CD8-positive, alpha-beta T cell (primary cell): ENCODE measurements at regions of chr19 and their contacts with region 1.

Region 1: GRCh38 chr19:9140159-9140874 is at the start of gene ZNF317:
- DNase-seq: peak; percentile 80 to 96 (median 90)
- ATAC-seq: peak; percentile 88
- H3K4me3 ChIP-seq: peak within 1 kb of the TSS; percentile 82 to 93
- H3K4me3 Mint-ChIP-seq: peak within 1 kb of the TSS; percentile 95
- H3K27ac ChIP-seq: peak within 1 kb of the TSS; percentile 86 to 88
- H3K27ac Mint-ChIP-seq: peak within 1 kb of the TSS; percentile 98
- H3K4me1 ChIP-seq: peaks cover 24% of the 10 kb centered on the region
- H3K4me1 Mint-ChIP-seq: peaks cover 46% of the 10 kb centered on the region
- H3K27me3 ChIP-seq: peaks cover 0 to 3% of the 10 kb centered on the region in 2 experiments
- H3K27me3 Mint-ChIP-seq: peaks cover 1% of the 10 kb centered on the region
- CTCF ChIP-seq: no peak
- total RNA-seq, gene ZNF317: 127 to 130 TPM

Region 2: GRCh38 chr19:9086761-9087160 is 53.6 kb before region 1 on chr19 and contains the start of gene OR1M1:
- CTCF ChIA-PET with region 1: no interaction called
- POLR2A ChIA-PET with region 1: no interaction called
- intact Hi-C with region 1: no loop called
- DNase-seq: no peak
- ATAC-seq: no peak
- H3K4me3 ChIP-seq: no peak within 1 kb of the TSS
- H3K4me3 Mint-ChIP-seq: no peak within 1 kb of the TSS
- H3K27ac ChIP-seq: no peak within 1 kb of the TSS
- H3K27ac Mint-ChIP-seq: no peak within 1 kb of the TSS
- H3K4me1 ChIP-seq: no peaks in the 10 kb centered on the region
- H3K4me1 Mint-ChIP-seq: no peaks in the 10 kb centered on the region
- H3K27me3 ChIP-seq: no peaks in the 10 kb centered on the region
- H3K27me3 Mint-ChIP-seq: peaks cover 25% of the 10 kb centered on the region
- CTCF ChIP-seq: no peak
- total RNA-seq, gene OR1M1: not detected

Region 3: DNA sequence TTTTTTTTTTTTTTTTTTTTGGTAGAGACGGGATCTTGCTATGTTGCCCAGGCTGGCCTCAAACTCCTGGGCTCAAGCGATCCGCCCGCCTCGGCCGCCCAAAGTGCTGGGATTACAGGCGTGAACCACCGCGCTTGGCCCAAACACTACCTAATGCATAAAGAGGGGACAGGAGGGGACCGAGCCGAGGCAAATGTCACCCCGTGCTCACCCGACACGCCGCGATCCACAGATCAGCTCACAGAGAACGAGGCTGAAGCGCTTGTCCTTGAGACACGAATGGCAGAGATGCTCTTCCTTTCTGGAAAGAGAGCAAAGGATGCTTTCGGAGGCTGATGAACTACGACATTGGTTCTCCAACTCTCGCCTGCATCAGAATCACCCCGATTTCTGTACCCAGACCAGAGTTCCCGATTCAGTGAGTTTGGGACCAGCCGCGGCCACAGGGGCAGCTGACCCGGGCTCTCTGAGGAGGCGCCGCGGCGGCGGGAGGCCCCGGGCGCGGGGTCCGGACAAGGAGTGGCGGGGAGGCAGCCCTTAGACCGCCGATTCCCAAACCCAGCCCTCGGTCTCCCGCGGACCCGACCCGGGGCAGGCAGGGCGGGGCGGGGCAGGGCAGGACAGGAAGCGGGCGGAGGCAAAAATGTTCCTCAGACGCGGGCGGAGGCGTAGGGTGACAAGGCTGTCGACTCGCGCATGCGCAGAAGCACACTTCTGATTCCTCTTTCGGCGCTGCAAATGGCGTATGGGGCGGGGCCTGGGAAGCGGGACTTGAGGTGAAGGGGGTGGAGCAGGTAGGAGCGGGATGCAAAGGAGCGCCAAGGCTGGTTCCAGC is 169.0 kb after region 1 on chr19 and contains the start of gene ZNF699:
- CTCF ChIA-PET with region 1: no interaction called
- POLR2A ChIA-PET with region 1: no interaction called
- intact Hi-C with region 1: loop called (anchors 1 kb)
- DNase-seq: peak; percentile 96 to 99 (median 98)
- ATAC-seq: peak; percentile 90
- H3K4me3 ChIP-seq: peak within 1 kb of the TSS; percentile 86 to 100
- H3K4me3 Mint-ChIP-seq: peak within 1 kb of the TSS; percentile 94
- H3K27ac ChIP-seq: peak within 1 kb of the TSS; percentile 86
- H3K27ac Mint-ChIP-seq: peak within 1 kb of the TSS; percentile 96
- H3K4me1 ChIP-seq: peaks cover 13% of the 10 kb centered on the region
- H3K4me1 Mint-ChIP-seq: peaks cover 34% of the 10 kb centered on the region
- H3K27me3 ChIP-seq: no peaks in the 10 kb centered on the region
- H3K27me3 Mint-ChIP-seq: no peaks in the 10 kb centered on the region
- CTCF ChIP-seq: no peak
- total RNA-seq, gene ZNF699: 15.1 to 16.0 TPM

Region 4: GRCh38 chr19:9538183-9539058 is 398.1 kb after region 1 on chr19 and contains the start of gene ZNF426:
- CTCF ChIA-PET with region 1: no interaction called
- POLR2A ChIA-PET with region 1: no interaction called
- intact Hi-C with region 1: loop called in 1 of 2 experiments (anchors 5 kb)
- DNase-seq: peak; percentile 77 to 92 (median 86)
- ATAC-seq: peak; percentile 94
- H3K4me3 ChIP-seq: peak within 1 kb of the TSS; percentile 89 to 93
- H3K4me3 Mint-ChIP-seq: peak within 1 kb of the TSS; percentile 99
- H3K27ac ChIP-seq: peak within 1 kb of the TSS; percentile 91
- H3K27ac Mint-ChIP-seq: peak within 1 kb of the TSS; percentile 100
- H3K4me1 ChIP-seq: peaks cover 17% of the 10 kb centered on the region
- H3K4me1 Mint-ChIP-seq: peaks cover 35% of the 10 kb centered on the region
- H3K27me3 ChIP-seq: no peaks in the 10 kb centered on the region
- H3K27me3 Mint-ChIP-seq: no peaks in the 10 kb centered on the region
- CTCF ChIP-seq: no peak
- total RNA-seq, gene ZNF426: 16.6 to 17.9 TPM

Region 5: DNA sequence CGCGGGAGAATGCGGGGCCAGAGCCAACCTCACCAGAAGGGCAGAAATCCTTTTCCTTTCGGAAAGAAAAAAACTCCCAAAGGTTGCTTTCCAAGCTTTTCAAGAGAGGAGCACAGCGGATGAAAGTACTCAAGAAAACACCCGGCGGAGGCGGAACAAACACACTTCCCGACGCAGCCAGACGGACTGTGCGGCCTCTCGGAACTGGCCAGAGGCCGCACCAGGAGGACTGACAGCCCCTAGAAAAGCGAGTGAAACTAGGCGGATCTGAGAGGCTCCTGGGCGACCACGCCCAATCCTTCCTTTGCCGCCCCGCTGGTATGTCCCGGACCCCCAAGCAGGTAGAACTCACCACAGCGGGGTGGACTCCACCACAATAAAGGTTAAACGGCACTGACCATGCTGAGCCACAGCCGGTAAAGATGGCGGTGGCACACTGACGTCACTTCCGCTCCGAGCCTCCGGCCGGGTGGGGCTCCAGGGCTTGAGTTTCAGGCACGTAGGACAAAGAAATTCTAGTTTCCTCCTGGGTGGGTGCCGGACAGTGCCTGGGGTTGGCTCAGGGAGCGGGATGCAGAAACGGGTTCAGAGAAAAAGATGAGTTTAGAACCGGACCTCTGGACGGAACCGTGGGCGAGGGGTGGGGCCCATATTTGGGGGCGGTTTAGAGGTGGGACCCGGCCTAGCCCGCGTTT is 534.5 kb after region 1 on chr19 and contains the start of gene ZNF562:
- CTCF ChIA-PET with region 1: no interaction called
- POLR2A ChIA-PET with region 1: no interaction called
- intact Hi-C with region 1: loop called in 1 of 2 experiments (anchors 2 kb)
- DNase-seq: peak; percentile 60 to 89 (median 81)
- ATAC-seq: peak; percentile 81
- H3K4me3 ChIP-seq: peak within 1 kb of the TSS; percentile 65 to 90
- H3K4me3 Mint-ChIP-seq: peak within 1 kb of the TSS; percentile 97
- H3K27ac ChIP-seq: peak within 1 kb of the TSS; percentile 80 to 84
- H3K27ac Mint-ChIP-seq: peak within 1 kb of the TSS; percentile 99
- H3K4me1 ChIP-seq: no peaks in the 10 kb centered on the region
- H3K4me1 Mint-ChIP-seq: peaks cover 23% of the 10 kb centered on the region
- H3K27me3 ChIP-seq: no peaks in the 10 kb centered on the region
- H3K27me3 Mint-ChIP-seq: no peaks in the 10 kb centered on the region
- CTCF ChIP-seq: no peak
- total RNA-seq, gene ZNF562: 13.6 to 16.5 TPM

Region 6: GRCh38 chr19:9818734-9819589 is 678.6 kb after region 1 on chr19 and contains the start of gene FBXL12:
- CTCF ChIA-PET with region 1: no interaction called
- POLR2A ChIA-PET with region 1: no interaction called
- intact Hi-C with region 1: loop called in 1 of 2 experiments (anchors 1 kb)
- DNase-seq: peak; percentile 100
- ATAC-seq: peak; percentile 89
- H3K4me3 ChIP-seq: peak within 1 kb of the TSS; percentile 97 to 100
- H3K4me3 Mint-ChIP-seq: peak within 1 kb of the TSS; percentile 88
- H3K27ac ChIP-seq: peak within 1 kb of the TSS; percentile 98 to 99
- H3K27ac Mint-ChIP-seq: peak within 1 kb of the TSS; percentile 93
- H3K4me1 ChIP-seq: peaks cover 18% of the 10 kb centered on the region
- H3K4me1 Mint-ChIP-seq: peaks cover 38% of the 10 kb centered on the region
- H3K27me3 ChIP-seq: no peaks in the 10 kb centered on the region
- H3K27me3 Mint-ChIP-seq: no peaks in the 10 kb centered on the region
- CTCF ChIP-seq: no peak
- total RNA-seq, gene FBXL12: 38.9 to 41.3 TPM

Region 7: GRCh38 chr19:10027158-10027693 is 886.9 kb after region 1 on chr19:
- CTCF ChIA-PET with region 1: no interaction called
- POLR2A ChIA-PET with region 1: no interaction called
- intact Hi-C with region 1: loop called (anchors 1 to 10 kb)
- DNase-seq: no peak
- ATAC-seq: no peak
- H3K4me3 ChIP-seq: no peak overlapping the region
- H3K4me3 Mint-ChIP-seq: no peak overlapping the region
- H3K27ac ChIP-seq: no peak overlapping the region
- H3K27ac Mint-ChIP-seq: no peak overlapping the region
- H3K4me1 ChIP-seq: peaks cover 8% of the 10 kb centered on the region
- H3K4me1 Mint-ChIP-seq: peaks cover 7% of the 10 kb centered on the region
- H3K27me3 ChIP-seq: peaks cover 3 to 5% of the 10 kb centered on the region in 2 experiments
- H3K27me3 Mint-ChIP-seq: peaks cover 18% of the 10 kb centered on the region
- CTCF ChIP-seq: no peak